ENCODE measurements at regions of chr11 and their contacts with region 1.

Region 1: GRCh38 chr11:15929371-15929901 is 426.9 kb downstream of the SOX6 start:
- DNase-seq: no peak
- ATAC-seq: no peak
- H3K4me3 ChIP-seq: no peak overlapping the region
- H3K27ac ChIP-seq: no peak overlapping the region
- H3K4me1 ChIP-seq: no peaks in the 10 kb centered on the region
- H3K27me3 ChIP-seq: no peaks in the 10 kb centered on the region
- CTCF ChIP-seq: no peak
- EP300 ChIP-seq: no peak
- POLR2A ChIP-seq: no peak
- RAD21 ChIP-seq: no peak

Region 2: GRCh38 chr11:15793043-15793996 is 136.1 kb before region 1 on chr11:
- CTCF ChIA-PET with region 1: no interaction called
- POLR2A ChIA-PET with region 1: no interaction called
- RAD21 ChIA-PET with region 1: no interaction called
- SMC1A ChIA-PET with region 1: no interaction called
- in situ Hi-C with region 1: no loop called
- intact Hi-C with region 1: no loop called
- DNase-seq: no peak
- ATAC-seq: no peak
- H3K4me3 ChIP-seq: no peak overlapping the region
- H3K27ac ChIP-seq: no peak overlapping the region
- H3K4me1 ChIP-seq: no peaks in the 10 kb centered on the region
- H3K27me3 ChIP-seq: no peaks in the 10 kb centered on the region
- CTCF ChIP-seq: no peak
- EP300 ChIP-seq: no peak
- POLR2A ChIP-seq: no peak
- RAD21 ChIP-seq: no peak

Region 3: DNA sequence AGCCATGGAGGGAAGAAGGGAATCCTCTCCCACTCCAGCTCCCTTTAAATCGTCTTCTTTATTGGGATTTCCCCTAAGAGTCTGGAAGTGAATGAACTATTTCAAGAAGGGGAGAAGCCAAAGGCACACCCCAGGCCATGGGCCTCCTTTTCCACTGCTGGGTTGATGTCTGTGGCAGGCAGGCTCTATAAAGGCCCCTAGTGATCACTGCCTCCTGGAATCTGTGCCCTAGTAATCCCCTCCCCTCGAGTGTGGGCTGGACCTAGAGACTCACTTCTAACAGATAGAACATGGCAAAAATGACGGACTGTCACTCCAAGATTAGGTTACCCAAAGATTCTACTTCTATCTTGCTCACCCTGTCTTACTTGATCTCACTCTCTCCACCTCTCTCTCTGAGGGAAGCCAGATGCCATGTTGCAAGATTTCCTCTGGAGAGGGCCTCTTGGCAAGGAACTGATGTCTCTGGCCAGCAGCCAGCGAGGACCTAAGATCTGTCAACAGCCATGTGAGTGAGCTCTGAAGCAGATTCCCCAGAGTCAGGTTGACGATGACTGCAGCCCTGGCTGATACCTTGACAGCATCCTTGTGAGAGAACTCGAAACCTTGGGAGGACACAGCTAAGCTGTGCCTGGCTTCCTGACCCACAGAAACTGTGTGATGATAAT is 17.9 kb before region 1 on chr11:
- CTCF ChIA-PET with region 1: no interaction called
- POLR2A ChIA-PET with region 1: no interaction called
- RAD21 ChIA-PET with region 1: no interaction called
- SMC1A ChIA-PET with region 1: no interaction called
- in situ Hi-C with region 1: no loop called
- intact Hi-C with region 1: no loop called
- DNase-seq: no peak
- ATAC-seq: no peak
- H3K4me3 ChIP-seq: no peak overlapping the region
- H3K27ac ChIP-seq: no peak overlapping the region
- H3K4me1 ChIP-seq: no peaks in the 10 kb centered on the region
- H3K27me3 ChIP-seq: no peaks in the 10 kb centered on the region; a peak in 2 of 4 replicates
- CTCF ChIP-seq: no peak
- EP300 ChIP-seq: no peak
- POLR2A ChIP-seq: no peak
- RAD21 ChIP-seq: no peak

Region 4: GRCh38 chr11:15941201-15941770 is 11.8 kb after region 1 on chr11:
- CTCF ChIA-PET with region 1: interaction called, 14 read pairs
- POLR2A ChIA-PET with region 1: no interaction called
- RAD21 ChIA-PET with region 1: no interaction called
- SMC1A ChIA-PET with region 1: interaction called, 4 read pairs
- in situ Hi-C with region 1: no loop called
- intact Hi-C with region 1: no loop called
- DNase-seq: no peak
- ATAC-seq: peak; percentile 90
- H3K4me3 ChIP-seq: no peak overlapping the region
- H3K27ac ChIP-seq: no peak overlapping the region
- H3K4me1 ChIP-seq: no peaks in the 10 kb centered on the region
- H3K27me3 ChIP-seq: no peaks in the 10 kb centered on the region
- CTCF ChIP-seq: peak; percentile 71 to 94 (median 88)
- EP300 ChIP-seq: no peak
- POLR2A ChIP-seq: no peak
- RAD21 ChIP-seq: peak; percentile 73

Region 5: GRCh38 chr11:16012125-16012751 is 82.8 kb after region 1 on chr11:
- CTCF ChIA-PET with region 1: no interaction called
- POLR2A ChIA-PET with region 1: no interaction called
- RAD21 ChIA-PET with region 1: no interaction called
- SMC1A ChIA-PET with region 1: no interaction called
- in situ Hi-C with region 1: no loop called
- intact Hi-C with region 1: no loop called
- DNase-seq: no peak
- ATAC-seq: no peak
- H3K4me3 ChIP-seq: no peak overlapping the region
- H3K27ac ChIP-seq: no peak overlapping the region
- H3K4me1 ChIP-seq: no peaks in the 10 kb centered on the region
- H3K27me3 ChIP-seq: no peaks in the 10 kb centered on the region; a peak in 2 of 4 replicates
- CTCF ChIP-seq: no peak
- EP300 ChIP-seq: no peak
- POLR2A ChIP-seq: no peak
- RAD21 ChIP-seq: no peak

Region 6: DNA sequence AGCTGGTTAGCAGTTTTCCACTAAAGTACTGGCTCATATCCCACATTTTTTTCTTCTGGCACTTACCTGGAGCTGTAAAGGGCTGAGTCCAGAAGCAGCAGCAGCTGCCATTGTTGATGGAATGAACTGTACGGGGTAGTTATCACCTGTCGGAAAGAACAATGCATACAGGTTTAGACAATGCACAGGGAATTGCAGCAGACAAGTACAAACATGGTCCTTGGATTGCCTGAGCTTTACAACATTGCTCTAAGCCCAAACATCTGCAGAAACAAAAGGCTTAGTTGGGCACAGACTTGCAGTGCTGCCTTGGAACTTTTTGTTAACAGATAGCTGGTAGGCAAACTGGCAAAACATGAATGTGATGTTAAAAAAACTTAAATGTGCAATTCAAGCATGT is 168.1 kb after region 1 on chr11:
- CTCF ChIA-PET with region 1: no interaction called
- POLR2A ChIA-PET with region 1: no interaction called
- RAD21 ChIA-PET with region 1: no interaction called
- SMC1A ChIA-PET with region 1: no interaction called
- in situ Hi-C with region 1: no loop called
- intact Hi-C with region 1: no loop called
- DNase-seq: no peak
- ATAC-seq: no peak
- H3K4me3 ChIP-seq: no peak overlapping the region
- H3K27ac ChIP-seq: no peak overlapping the region
- H3K4me1 ChIP-seq: no peaks in the 10 kb centered on the region
- H3K27me3 ChIP-seq: no peaks in the 10 kb centered on the region
- CTCF ChIP-seq: no peak
- EP300 ChIP-seq: no peak
- POLR2A ChIP-seq: no peak
- RAD21 ChIP-seq: no peak